Natural killer cell (primary cell): ENCODE measurements at regions of chr2 and their contacts with region 1.

Region 1: GRCh38 chr2:24501813-24502212 is 10.8 kb downstream of the NCOA1 start:
- DNase-seq: no peak
- ATAC-seq: no peak
- H3K4me3 ChIP-seq: no peak overlapping the region
- H3K4me3 Mint-ChIP-seq: no peak overlapping the region
- H3K27ac ChIP-seq: no peak overlapping the region
- H3K27ac Mint-ChIP-seq: no peak overlapping the region
- H3K4me1 ChIP-seq: no peaks in the 10 kb centered on the region
- H3K4me1 Mint-ChIP-seq: peaks cover 73 to 81% of the 10 kb centered on the region in 2 donors
- H3K27me3 ChIP-seq: no peaks in the 10 kb centered on the region
- H3K27me3 Mint-ChIP-seq: no peaks in the 10 kb centered on the region
- CTCF ChIP-seq: no peak

Region 2: GRCh38 chr2:24471662-24472061 is 30.2 kb before region 1 on chr2:
- intact Hi-C with region 1: no loop called
- DNase-seq: peak in 1 of 2 donors; percentile 44
- ATAC-seq: peak in 1 of 3 donors; percentile 50
- H3K4me3 ChIP-seq: no peak overlapping the region
- H3K4me3 Mint-ChIP-seq: no peak overlapping the region
- H3K27ac ChIP-seq: no peak overlapping the region
- H3K27ac Mint-ChIP-seq: no peak overlapping the region
- H3K4me1 ChIP-seq: no peaks in the 10 kb centered on the region
- H3K4me1 Mint-ChIP-seq: no peaks in the 10 kb centered on the region
- H3K27me3 ChIP-seq: no peaks in the 10 kb centered on the region
- H3K27me3 Mint-ChIP-seq: no peaks in the 10 kb centered on the region
- CTCF ChIP-seq: no peak

Region 3: DNA sequence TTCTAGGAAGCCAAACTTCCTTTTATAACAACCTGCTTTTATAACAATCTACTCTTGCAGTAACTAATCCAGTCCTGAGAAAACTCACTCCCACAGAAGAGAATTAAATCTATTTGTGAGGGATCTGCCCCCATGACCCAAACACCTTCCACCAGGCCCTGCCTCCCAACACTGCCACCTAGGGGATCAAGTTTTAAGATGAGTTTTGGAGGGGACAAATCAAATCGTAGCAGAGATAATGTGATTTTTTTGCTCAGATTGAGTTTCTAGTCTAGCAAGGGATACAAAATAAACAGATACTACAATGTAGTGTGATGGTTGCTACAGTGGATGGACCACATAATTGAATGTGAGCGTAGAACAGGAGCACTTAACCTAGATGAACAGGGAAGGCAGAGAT is 41.4 kb after region 1 on chr2:
- intact Hi-C with region 1: loop called (anchors 5 kb)
- DNase-seq: peak in 1 of 2 donors; percentile 33
- ATAC-seq: peak; percentile 50 to 57 (median 51)
- H3K4me3 ChIP-seq: no peak overlapping the region
- H3K4me3 Mint-ChIP-seq: peak overlapping the region; percentile 0
- H3K27ac ChIP-seq: no peak overlapping the region
- H3K27ac Mint-ChIP-seq: peak overlapping the region; percentile 15 to 52
- H3K4me1 ChIP-seq: peaks cover 13% of the 10 kb centered on the region
- H3K4me1 Mint-ChIP-seq: peaks cover 65 to 75% of the 10 kb centered on the region in 2 donors
- H3K27me3 ChIP-seq: no peaks in the 10 kb centered on the region
- H3K27me3 Mint-ChIP-seq: no peaks in the 10 kb centered on the region
- CTCF ChIP-seq: peak; percentile 54

Region 4: DNA sequence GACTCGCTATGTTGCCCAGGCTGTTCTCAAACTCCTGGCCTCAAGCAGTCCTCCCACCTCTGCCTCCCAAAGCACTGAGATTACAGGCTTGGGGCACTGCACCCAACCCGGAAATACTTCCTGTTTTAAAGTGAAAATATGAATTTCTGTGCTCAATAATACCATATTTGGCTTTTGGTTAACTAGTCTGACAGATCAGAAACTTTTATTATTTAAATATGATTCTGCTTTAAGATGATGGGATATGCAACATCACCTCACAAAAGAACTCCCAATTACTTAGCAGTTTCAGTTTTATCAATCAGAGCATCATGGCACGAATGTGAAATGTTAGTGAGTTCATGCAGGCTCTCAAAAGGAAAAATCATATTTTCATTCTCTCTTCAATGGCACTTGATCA is 170.8 kb after region 1 on chr2:
- intact Hi-C with region 1: no loop called
- DNase-seq: no peak
- ATAC-seq: no peak
- H3K4me3 ChIP-seq: no peak overlapping the region
- H3K4me3 Mint-ChIP-seq: no peak overlapping the region
- H3K27ac ChIP-seq: no peak overlapping the region
- H3K27ac Mint-ChIP-seq: peak overlapping the region; percentile 35 to 57
- H3K4me1 ChIP-seq: no peaks in the 10 kb centered on the region
- H3K4me1 Mint-ChIP-seq: peaks cover 6 to 11% of the 10 kb centered on the region in 2 donors
- H3K27me3 ChIP-seq: no peaks in the 10 kb centered on the region
- H3K27me3 Mint-ChIP-seq: no peaks in the 10 kb centered on the region
- CTCF ChIP-seq: no peak

Region 5: DNA sequence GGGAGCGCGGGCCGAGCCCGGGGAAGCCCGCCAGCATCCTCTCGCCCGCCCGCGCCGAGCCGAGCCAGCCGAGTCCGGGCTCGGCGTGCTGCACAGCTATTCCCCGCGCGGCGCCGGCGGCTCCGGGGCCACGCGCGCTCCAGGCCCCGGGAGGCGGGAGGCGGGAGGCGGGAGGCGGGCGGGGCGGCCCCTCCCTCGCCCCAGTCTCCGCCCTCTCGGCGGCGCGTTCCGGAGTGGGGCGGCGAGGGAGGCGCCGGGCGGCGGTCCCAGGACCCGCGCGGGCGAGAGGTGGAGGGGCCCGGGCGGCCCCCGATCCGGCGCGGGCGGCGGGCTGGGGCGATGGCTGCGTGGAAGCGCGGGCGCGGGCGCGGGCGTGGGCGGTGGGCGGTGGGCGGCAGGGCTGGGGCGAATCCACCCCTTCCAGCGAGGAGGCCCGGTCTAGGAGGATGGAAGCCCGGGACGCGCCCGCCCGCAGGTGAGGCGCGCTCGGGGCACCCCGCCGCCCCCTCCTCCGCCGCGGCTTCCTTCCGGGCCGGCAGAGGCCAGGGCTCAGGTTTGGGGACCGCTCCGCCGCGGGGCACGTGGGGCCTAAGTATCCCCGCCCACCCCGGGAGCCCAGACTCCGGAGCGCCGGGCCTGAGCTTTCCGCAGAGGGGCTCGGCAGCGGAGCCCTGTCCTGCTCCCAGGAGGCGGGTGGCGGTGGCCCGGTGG is 418.4 kb after region 1 on chr2 and contains the start of gene ADCY3:
- intact Hi-C with region 1: no loop called
- DNase-seq: peak; percentile 41 to 78
- ATAC-seq: peak; percentile 69 to 72 (median 71)
- H3K4me3 ChIP-seq: peak within 1 kb of the TSS; percentile 34
- H3K4me3 Mint-ChIP-seq: peak within 1 kb of the TSS; percentile 85
- H3K27ac ChIP-seq: no peak within 1 kb of the TSS
- H3K27ac Mint-ChIP-seq: peak within 1 kb of the TSS; percentile 58 to 63
- H3K4me1 ChIP-seq: peaks cover 34% of the 10 kb centered on the region
- H3K4me1 Mint-ChIP-seq: peaks cover 25 to 36% of the 10 kb centered on the region in 2 donors
- H3K27me3 ChIP-seq: no peaks in the 10 kb centered on the region
- H3K27me3 Mint-ChIP-seq: peaks cover 6 to 8% of the 10 kb centered on the region in 2 donors
- CTCF ChIP-seq: no peak
- total RNA-seq, gene ADCY3: 5.4 to 9.2 (median 7.6) TPM

Region 6: GRCh38 chr2:25000503-25001324 is 498.9 kb after region 1 on chr2:
- intact Hi-C with region 1: no loop called
- DNase-seq: no peak
- ATAC-seq: no peak
- H3K4me3 ChIP-seq: no peak overlapping the region
- H3K4me3 Mint-ChIP-seq: no peak overlapping the region
- H3K27ac ChIP-seq: no peak overlapping the region
- H3K27ac Mint-ChIP-seq: no peak overlapping the region
- H3K4me1 ChIP-seq: no peaks in the 10 kb centered on the region
- H3K4me1 Mint-ChIP-seq: no peaks in the 10 kb centered on the region
- H3K27me3 ChIP-seq: no peaks in the 10 kb centered on the region
- H3K27me3 Mint-ChIP-seq: peaks cover 0 to 6% of the 10 kb centered on the region in 2 donors
- CTCF ChIP-seq: no peak